ENCODE measurements at regions of chr12 and their contacts with region 1.

Region 1: DNA sequence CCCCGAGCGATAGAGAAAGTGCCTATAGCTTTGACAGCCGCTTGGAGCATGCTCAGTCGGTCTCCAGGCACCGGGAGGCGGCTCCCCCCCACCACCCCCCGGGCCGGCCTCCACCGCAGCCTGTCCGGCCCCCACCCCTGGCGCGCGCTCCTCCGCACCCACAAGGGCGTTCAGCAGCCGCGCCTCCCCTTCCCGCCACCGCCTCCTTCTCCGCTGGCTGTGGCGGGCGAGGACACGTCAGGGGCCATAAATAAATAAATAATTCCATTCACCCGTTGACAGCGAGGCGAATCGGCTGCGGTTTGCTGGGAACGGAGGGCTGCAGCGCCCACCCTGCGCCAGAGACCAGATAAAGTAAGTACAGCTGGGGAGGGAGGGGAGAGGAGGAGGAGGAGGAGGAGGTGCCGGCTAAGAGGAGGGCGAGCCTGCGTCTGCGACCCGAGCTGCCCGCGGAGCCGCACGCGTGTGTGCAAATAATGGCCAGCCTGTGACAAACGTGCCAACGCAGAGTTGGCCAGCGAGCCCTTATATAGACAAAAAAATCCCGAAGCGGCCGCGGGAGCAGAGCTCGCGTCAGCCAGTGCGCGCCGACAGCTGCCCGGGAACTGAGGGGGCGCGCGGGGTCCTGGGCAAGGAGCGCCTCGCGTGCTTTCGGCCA is at the start of gene SLC16A7:
- DNase-seq: peak; percentile 67 to 96
- H3K4me3 ChIP-seq: peak within 1 kb of the TSS; percentile 81 to 82
- H3K27ac ChIP-seq: peak within 1 kb of the TSS; percentile 98 to 99
- H3K4me1 ChIP-seq: peaks cover 0 to 15% of the 10 kb centered on the region in 2 donors
- H3K27me3 ChIP-seq: no peaks in the 10 kb centered on the region
- CTCF ChIP-seq: peak in 1 of 3 experiments; percentile 2
- total RNA-seq, gene SLC16A7: 12.6 TPM

Region 2: GRCh38 chr12:58425481-58426392 is 1170.3 kb before region 1 on chr12:
- intact Hi-C with region 1: loop called (anchors 10 kb)
- DNase-seq: no peak
- H3K4me3 ChIP-seq: no peak overlapping the region
- H3K27ac ChIP-seq: peak overlapping the region; percentile 61 to 73
- H3K4me1 ChIP-seq: peaks cover 0 to 16% of the 10 kb centered on the region in 2 donors
- H3K27me3 ChIP-seq: no peaks in the 10 kb centered on the region
- CTCF ChIP-seq: no peak

Region 3: DNA sequence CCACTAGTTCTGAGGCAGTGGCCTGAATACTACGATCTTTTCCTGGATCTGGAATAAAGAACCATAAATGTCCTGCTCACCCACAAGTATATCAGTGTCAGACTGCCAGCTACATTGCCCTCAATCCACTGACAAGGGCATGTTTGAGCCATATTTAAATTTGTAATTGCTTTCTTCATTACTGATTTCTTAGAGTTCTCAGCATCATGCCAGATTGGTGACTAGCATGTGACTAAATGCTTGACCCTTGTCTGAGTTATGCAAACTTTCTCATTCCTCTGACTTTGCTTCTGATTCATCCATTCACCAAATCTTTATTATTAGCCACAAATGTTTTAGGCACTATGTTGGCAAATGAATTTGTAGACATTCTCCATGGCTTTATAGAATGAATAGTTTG is 143.8 kb before region 1 on chr12:
- intact Hi-C with region 1: loop called (anchors 10 kb)
- DNase-seq: no peak
- H3K4me3 ChIP-seq: no peak overlapping the region
- H3K27ac ChIP-seq: no peak overlapping the region
- H3K4me1 ChIP-seq: peaks cover 0 to 3% of the 10 kb centered on the region in 2 donors
- H3K27me3 ChIP-seq: no peaks in the 10 kb centered on the region
- CTCF ChIP-seq: no peak

Region 4: DNA sequence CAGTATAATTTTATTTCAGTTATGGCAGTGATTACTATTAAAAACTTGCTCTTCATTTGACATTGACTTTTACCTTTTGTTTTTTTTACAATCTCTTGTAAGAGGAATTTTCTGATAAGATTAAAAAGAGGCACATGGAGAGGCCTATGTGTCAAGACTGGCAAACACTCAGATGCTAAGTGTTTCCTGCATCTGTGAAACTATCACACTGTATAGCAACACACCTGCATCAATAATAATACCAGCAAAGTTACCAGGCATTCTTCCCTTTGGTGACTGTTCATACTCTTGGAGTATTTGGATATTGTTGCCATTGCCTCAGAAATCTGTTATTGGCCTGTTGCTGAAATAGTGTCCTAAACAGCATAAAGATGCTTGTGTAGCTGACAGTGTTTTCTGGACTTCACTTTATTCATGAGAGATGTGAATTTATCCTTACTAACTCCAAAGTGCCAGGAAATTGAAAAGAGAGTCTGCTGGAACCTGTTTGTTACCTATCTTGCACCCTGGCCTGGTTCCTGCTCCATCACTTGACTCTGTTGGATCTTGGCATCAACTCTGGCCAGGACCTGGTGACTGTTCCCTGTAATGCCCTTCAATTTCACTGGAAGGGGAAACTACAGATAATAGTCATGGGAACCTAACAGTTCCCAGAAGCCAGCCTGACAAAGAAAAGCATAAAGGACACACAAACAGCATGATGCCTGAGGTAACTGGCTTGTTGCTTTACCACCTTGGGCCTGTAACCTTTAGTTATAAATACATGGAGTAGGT is 19.6 kb after region 1 on chr12:
- intact Hi-C with region 1: loop called (anchors 2 kb)
- DNase-seq: no peak
- H3K4me3 ChIP-seq: no peak overlapping the region
- H3K27ac ChIP-seq: peak overlapping the region in 1 of 2 donors; percentile 71
- H3K4me1 ChIP-seq: peaks cover 0 to 9% of the 10 kb centered on the region in 2 donors
- H3K27me3 ChIP-seq: no peaks in the 10 kb centered on the region
- CTCF ChIP-seq: no peak

Region 5: GRCh38 chr12:59650402-59651228 is 54.6 kb after region 1 on chr12:
- intact Hi-C with region 1: loop called (anchors 2 kb)
- DNase-seq: no peak
- H3K4me3 ChIP-seq: no peak overlapping the region
- H3K27ac ChIP-seq: peak overlapping the region in 1 of 2 donors; percentile 51
- H3K4me1 ChIP-seq: peaks cover 0 to 12% of the 10 kb centered on the region in 2 donors
- H3K27me3 ChIP-seq: no peaks in the 10 kb centered on the region
- CTCF ChIP-seq: no peak

Region 6: DNA sequence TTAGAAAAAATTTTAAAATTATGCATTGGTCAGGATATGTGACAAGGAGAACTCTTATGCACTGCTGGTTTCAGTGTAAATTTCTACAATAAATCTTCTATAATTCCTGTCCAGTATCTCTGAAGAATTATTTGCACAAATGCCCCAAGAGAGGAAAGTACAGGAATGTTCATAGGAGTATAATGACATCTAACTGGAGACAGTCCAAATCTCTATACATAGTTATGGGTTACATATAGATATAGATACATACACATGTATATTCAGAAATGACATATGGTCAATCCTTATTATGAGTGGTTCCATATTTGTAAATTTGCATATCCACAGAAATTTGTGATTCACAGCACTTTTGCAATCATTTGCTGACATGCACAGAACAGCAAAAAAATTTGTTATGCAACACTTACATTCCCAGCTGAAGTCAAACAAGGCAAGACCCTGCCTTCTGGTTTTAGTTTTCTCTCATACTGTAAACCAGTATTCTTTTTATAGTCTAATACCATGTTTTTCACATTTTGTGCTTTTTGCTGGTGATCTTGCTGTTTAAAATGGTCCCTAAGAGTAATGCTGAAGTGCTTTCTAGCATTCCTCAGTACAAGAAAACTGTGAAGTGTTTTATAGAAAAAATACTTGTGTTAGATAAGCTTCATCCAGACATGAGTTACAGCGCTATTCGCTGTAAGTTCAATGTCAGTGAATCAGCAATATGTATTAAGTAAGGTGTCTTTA is 103.6 kb after region 1 on chr12:
- intact Hi-C with region 1: no loop called
- DNase-seq: no peak
- H3K4me3 ChIP-seq: no peak overlapping the region
- H3K27ac ChIP-seq: no peak overlapping the region
- H3K4me1 ChIP-seq: no peaks in the 10 kb centered on the region
- H3K27me3 ChIP-seq: no peaks in the 10 kb centered on the region
- CTCF ChIP-seq: no peak

Region 7: DNA sequence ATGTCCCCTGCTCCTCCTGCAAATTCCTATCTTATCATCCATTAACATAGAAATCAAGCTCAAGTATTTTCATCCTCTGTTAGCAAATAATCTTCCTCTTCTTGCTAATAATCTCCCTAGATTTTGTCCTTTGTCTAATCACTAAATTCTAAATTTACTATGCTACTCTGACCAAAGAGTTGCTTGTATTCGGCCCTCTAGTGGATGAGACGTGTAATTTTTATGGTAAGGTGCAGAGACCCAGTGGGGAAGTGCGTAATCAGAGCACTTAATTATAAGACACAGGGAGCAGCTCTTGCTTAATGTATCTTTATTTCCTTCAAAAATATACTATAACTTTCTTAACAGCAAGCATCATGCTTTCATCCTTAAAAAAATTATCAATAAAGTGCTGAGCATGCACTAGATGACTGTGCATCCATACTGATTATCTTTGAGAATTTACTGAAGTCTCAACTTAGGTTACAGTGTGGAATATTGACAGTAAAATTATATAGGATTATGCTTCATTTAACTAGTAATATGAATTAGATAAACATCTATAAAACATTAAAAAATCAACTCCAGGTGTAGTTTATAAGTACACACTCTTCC is 212.4 kb after region 1 on chr12:
- intact Hi-C with region 1: loop called (anchors 10 kb)
- DNase-seq: no peak
- H3K4me3 ChIP-seq: no peak overlapping the region
- H3K27ac ChIP-seq: no peak overlapping the region
- H3K4me1 ChIP-seq: no peaks in the 10 kb centered on the region
- H3K27me3 ChIP-seq: no peaks in the 10 kb centered on the region
- CTCF ChIP-seq: peak; percentile 39 to 74 (median 70)

Measured in ascending aorta (tissue), 2 donors.